Naive thymus-derived CD4-positive, alpha-beta T cell (primary cell): ENCODE measurements at regions of chr12 and their contacts with region 1.

Region 1: DNA sequence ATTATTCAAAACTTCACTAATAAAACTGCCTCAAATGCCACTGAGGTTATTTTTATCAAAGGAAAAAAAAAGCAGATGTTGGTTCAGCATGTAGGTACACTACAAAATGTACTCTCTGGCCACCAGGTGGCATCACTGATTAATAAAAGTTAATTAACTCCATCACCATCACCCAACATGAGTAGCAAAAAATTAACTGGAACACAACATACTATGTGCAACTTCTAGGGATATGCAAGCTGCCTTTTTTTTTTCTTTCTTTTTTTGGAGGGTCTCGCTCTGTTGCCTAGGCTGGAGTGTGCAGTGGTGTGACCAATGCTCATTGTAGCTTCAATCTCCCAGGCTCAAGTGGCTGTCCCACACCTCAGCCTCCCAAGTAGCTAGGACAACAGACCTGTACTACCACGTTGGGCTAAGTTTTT is 43.8 kb upstream of the NR2C1 start:
- DNase-seq: peak; percentile 16 to 77 (median 67)
- ATAC-seq: peak; percentile 87
- H3K4me3 ChIP-seq: no peak overlapping the region
- H3K4me3 Mint-ChIP-seq: no peak overlapping the region
- H3K27ac ChIP-seq: no peak overlapping the region
- H3K27ac Mint-ChIP-seq: no peak overlapping the region
- H3K4me1 ChIP-seq: no peaks in the 10 kb centered on the region
- H3K4me1 Mint-ChIP-seq: peaks cover 0 to 7% (median 0%) of the 10 kb centered on the region in 7 donors
- H3K27me3 ChIP-seq: no peaks in the 10 kb centered on the region
- H3K27me3 Mint-ChIP-seq: no peaks in the 10 kb centered on the region

Region 2: DNA sequence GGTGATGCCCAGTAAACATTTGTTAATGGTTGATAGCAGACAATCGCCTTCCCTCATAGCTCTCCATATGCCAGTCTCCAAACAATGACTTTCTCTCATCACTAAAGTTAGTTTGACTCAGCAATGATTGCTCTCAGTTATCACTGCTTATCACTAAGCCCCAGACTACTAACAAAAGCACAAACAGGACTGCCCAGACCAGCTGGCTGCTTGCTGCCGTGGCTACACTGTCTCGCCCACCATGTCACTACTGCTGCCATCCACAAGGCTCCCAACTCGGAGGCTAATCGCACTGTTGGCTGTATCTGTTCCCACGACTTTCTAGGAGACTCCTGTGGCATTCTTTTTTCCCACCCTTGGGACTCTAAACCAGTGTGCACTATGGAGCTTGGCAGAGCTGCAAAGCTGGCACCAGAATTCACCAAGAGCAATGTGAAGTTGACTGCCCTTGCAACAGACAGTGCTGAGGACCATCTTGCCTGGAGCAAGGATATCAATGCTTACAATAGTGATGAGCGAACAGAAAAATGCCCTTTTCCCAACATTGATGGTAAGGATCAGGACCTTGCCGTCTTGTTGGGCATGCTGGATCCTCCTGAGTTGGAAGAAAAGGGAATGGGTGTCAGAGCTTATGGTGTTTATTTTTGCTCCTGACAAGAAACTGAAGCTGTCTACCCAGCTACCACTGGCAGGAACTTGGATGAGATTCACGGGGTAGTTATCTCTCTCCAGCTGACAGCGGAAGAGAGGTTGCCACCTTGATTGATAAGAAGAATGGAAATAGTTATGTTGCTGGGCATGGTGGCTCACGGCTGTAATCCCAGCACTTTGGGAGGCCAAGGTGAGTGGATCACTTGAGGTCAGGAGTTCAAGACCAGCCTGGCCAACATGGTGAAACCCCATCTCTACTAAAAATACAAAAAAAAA is 16.7 kb before region 1 on chr12:
- CTCF ChIA-PET with region 1: no interaction called
- POLR2A ChIA-PET with region 1: no interaction called
- intact Hi-C with region 1: no loop called
- DNase-seq: no peak
- ATAC-seq: no peak
- H3K4me3 ChIP-seq: no peak overlapping the region
- H3K4me3 Mint-ChIP-seq: no peak overlapping the region
- H3K27ac ChIP-seq: no peak overlapping the region
- H3K27ac Mint-ChIP-seq: peak overlapping the region in 1 of 9 donors; percentile 24
- H3K4me1 ChIP-seq: no peaks in the 10 kb centered on the region
- H3K4me1 Mint-ChIP-seq: peaks cover 0 to 11% (median 0%) of the 10 kb centered on the region in 7 donors
- H3K27me3 ChIP-seq: no peaks in the 10 kb centered on the region
- H3K27me3 Mint-ChIP-seq: peaks cover 0 to 4% (median 0%) of the 10 kb centered on the region in 5 donors

Region 3: GRCh38 chr12:95336390-95337067 is 219.3 kb after region 1 on chr12:
- CTCF ChIA-PET with region 1: no interaction called
- POLR2A ChIA-PET with region 1: no interaction called
- intact Hi-C with region 1: loop called (anchors 1 kb)
- DNase-seq: no peak
- ATAC-seq: no peak
- H3K4me3 ChIP-seq: no peak overlapping the region
- H3K4me3 Mint-ChIP-seq: no peak overlapping the region
- H3K27ac ChIP-seq: no peak overlapping the region
- H3K27ac Mint-ChIP-seq: peak overlapping the region in 3 of 9 donors; percentile 31 to 52 (median 48)
- H3K4me1 ChIP-seq: no peaks in the 10 kb centered on the region
- H3K4me1 Mint-ChIP-seq: peaks cover 0 to 9% (median 5%) of the 10 kb centered on the region in 7 donors
- H3K27me3 ChIP-seq: no peaks in the 10 kb centered on the region
- H3K27me3 Mint-ChIP-seq: peaks cover 0 to 2% (median 0%) of the 10 kb centered on the region in 5 donors

Region 4: GRCh38 chr12:95998611-95999286 is 881.6 kb after region 1 on chr12:
- CTCF ChIA-PET with region 1: no interaction called
- POLR2A ChIA-PET with region 1: no interaction called
- intact Hi-C with region 1: loop called in 1 of 2 experiments (anchors 1 kb)
- DNase-seq: peak in 7 of 9 donors; percentile 44 to 69 (median 58)
- ATAC-seq: peak; percentile 96
- H3K4me3 ChIP-seq: no peak overlapping the region
- H3K4me3 Mint-ChIP-seq: peak overlapping the region in 1 of 10 donors; percentile 11
- H3K27ac ChIP-seq: no peak overlapping the region
- H3K27ac Mint-ChIP-seq: peak overlapping the region in 5 of 9 donors; percentile 2 to 68 (median 16)
- H3K4me1 ChIP-seq: no peaks in the 10 kb centered on the region
- H3K4me1 Mint-ChIP-seq: peaks cover 0 to 13% (median 3%) of the 10 kb centered on the region in 7 donors
- H3K27me3 ChIP-seq: no peaks in the 10 kb centered on the region
- H3K27me3 Mint-ChIP-seq: no peaks in the 10 kb centered on the region